H1 (cell line): ENCODE measurements at regions of chr11 and their contacts with region 1.

Region 1: GRCh38 chr11:70603756-70604211 is 205.5 kb downstream of the CTTN start:
- DNase-seq: no peak
- H3K4me3 ChIP-seq: no peak overlapping the region
- H3K27ac ChIP-seq: no peak overlapping the region
- H3K4me1 ChIP-seq: peaks cover 0 to 14% (median 8%) of the 10 kb centered on the region in 4 experiments; a peak in 6 of 7 replicates
- H3K27me3 ChIP-seq: no peaks in the 10 kb centered on the region
- CTCF ChIP-seq: no peak
- EP300 ChIP-seq: no peak
- POLR2A ChIP-seq: no peak
- RAD21 ChIP-seq: no peak

Region 2: DNA sequence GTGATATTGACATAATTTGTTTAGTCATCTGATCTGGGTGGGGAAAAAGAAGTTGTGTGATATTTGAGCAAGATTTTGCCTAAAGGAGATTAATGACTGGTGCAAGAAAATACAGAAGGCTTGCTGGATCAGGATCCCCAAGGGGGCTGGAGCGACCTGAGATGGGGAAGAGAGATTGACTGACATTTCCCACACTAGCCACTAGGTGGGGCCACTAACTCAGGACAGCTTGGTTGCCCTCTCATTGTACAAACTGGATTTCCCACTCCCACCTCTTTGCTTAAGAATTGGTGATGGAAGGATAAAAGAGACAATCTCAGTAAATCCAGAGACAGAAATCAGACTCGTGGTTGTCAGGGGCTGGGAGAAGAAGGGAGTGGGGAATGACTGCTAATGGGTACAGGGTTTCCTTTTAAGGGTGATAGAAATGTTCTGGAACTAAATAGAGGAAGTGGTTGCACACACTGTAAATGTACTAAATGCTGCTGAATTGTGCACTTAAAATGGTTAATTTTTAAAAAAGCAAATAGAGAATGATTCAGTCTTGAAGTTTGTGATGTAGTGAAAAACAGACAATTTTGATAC is 154.7 kb before region 1 on chr11:
- CTCF ChIA-PET with region 1: no interaction called
- POLR2A ChIA-PET with region 1: no interaction called
- DNase-seq: no peak
- H3K4me3 ChIP-seq: no peak overlapping the region
- H3K27ac ChIP-seq: no peak overlapping the region
- H3K4me1 ChIP-seq: no peaks in the 10 kb centered on the region
- H3K27me3 ChIP-seq: no peaks in the 10 kb centered on the region
- CTCF ChIP-seq: peak; percentile 76 to 84 (median 79)
- EP300 ChIP-seq: no peak
- POLR2A ChIP-seq: no peak
- RAD21 ChIP-seq: peak; percentile 81 to 85

Region 3: DNA sequence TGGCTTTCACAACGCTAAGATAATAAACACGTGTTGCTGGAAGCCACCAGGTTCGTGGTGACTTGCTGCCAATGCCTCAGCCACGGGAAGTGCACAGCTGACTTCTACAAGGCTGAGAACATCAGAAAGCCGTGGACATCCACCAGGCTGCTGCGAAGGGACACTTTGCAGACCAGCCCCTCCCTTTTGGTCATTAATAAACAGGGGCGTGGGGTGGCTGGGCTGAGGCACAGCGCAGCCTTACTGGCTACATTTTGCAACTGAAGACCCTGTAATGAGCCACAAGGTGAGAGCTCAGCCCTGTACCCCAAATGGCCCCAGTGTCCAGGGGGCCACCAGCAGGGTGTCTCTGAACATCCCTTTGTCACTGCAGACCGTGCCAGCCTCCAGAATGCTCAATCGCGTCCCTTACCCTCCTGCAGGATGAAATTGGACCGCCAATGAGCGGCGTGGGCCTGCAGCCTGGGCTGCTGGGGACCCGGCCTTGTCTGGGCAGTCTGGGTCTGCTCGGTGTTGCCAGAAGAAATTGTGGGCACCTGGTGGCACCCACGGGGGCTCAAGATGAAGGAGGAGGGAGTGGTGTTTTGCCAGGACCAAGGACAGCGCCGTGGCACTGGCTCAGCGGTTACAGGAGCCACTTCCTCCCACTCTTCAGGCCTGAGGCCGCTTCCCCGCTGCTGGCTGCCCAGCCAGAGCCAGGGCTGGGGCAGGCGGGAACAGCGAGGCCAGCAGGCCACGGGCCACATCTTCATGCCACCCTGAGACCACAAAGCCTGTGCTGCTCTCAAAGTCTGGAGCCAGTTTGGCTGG is 23.5 kb before region 1 on chr11:
- CTCF ChIA-PET with region 1: interaction called, 10 read pairs
- POLR2A ChIA-PET with region 1: interaction called, 6 read pairs
- DNase-seq: peak in 1 of 2 experiments; percentile 54
- H3K4me3 ChIP-seq: no peak overlapping the region
- H3K27ac ChIP-seq: no peak overlapping the region
- H3K4me1 ChIP-seq: peaks cover 0 to 10% (median 4%) of the 10 kb centered on the region in 4 experiments; a peak in 5 of 7 replicates
- H3K27me3 ChIP-seq: no peaks in the 10 kb centered on the region
- CTCF ChIP-seq: no peak
- EP300 ChIP-seq: no peak
- POLR2A ChIP-seq: no peak
- RAD21 ChIP-seq: no peak

Region 4: DNA sequence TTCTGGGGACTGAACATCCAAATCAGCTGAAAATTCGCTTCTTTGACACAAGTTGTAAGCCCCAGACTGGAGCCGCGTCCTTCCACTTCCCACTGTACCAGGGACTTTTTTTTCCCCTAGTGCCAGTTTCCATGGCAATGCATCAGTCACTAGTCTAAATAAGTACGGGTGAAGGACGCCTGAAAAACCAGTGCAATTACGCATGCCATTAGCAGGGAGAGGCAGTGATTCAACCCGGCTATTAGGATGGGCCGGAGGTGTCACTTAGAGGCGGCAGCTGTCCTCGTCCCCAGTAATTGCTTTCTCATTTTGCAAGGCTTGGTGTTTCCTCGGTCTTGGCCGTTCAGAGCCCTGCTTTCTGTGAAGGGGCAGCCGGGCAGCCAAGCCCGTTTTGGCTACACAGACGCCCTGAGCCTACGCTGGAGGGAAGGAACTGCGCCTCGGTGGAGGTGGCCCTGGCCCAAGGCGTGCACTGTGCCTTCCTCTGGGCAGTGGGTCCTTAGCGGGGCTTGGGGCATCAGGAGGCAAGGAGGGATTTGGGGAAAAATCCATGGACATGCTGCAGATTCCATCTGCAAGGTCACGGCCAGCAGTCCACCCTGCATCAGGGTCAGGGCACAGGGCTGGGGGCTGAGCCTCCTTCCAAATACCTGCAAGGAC is 114.3 kb after region 1 on chr11:
- CTCF ChIA-PET with region 1: no interaction called
- POLR2A ChIA-PET with region 1: no interaction called
- DNase-seq: no peak
- H3K4me3 ChIP-seq: no peak overlapping the region
- H3K27ac ChIP-seq: no peak overlapping the region
- H3K4me1 ChIP-seq: peaks cover 0 to 12% (median 6%) of the 10 kb centered on the region in 4 experiments; a peak in 6 of 7 replicates
- H3K27me3 ChIP-seq: no peaks in the 10 kb centered on the region
- CTCF ChIP-seq: no peak
- EP300 ChIP-seq: no peak
- POLR2A ChIP-seq: no peak
- RAD21 ChIP-seq: no peak